ENCODE measurements at regions of chr9 and their contacts with region 1.

Region 1: GRCh38 chr9:117411548-117411947 is 3.3 kb downstream of the ASTN2 start:
- DNase-seq: peak; percentile 80
- ATAC-seq: peak; percentile 46
- H3K4me3 Mint-ChIP-seq: peak overlapping the region; percentile 53
- H3K27ac Mint-ChIP-seq: no peak overlapping the region
- H3K4me1 Mint-ChIP-seq: peaks cover 41% of the 10 kb centered on the region
- H3K27me3 Mint-ChIP-seq: peaks cover 28% of the 10 kb centered on the region
- CTCF ChIP-seq: peak; percentile 82

Region 2: GRCh38 chr9:117232281-117232680 is 179.3 kb before region 1 on chr9:
- CTCF ChIA-PET with region 1: interaction called, 12 read pairs
- POLR2A ChIA-PET with region 1: no interaction called
- DNase-seq: no peak
- ATAC-seq: no peak
- H3K4me3 Mint-ChIP-seq: no peak overlapping the region
- H3K27ac Mint-ChIP-seq: no peak overlapping the region
- H3K4me1 Mint-ChIP-seq: peaks cover 4% of the 10 kb centered on the region; the same call in 1 of the 2 replicates
- H3K27me3 Mint-ChIP-seq: no peaks in the 10 kb centered on the region
- CTCF ChIP-seq: no peak

Region 3: DNA sequence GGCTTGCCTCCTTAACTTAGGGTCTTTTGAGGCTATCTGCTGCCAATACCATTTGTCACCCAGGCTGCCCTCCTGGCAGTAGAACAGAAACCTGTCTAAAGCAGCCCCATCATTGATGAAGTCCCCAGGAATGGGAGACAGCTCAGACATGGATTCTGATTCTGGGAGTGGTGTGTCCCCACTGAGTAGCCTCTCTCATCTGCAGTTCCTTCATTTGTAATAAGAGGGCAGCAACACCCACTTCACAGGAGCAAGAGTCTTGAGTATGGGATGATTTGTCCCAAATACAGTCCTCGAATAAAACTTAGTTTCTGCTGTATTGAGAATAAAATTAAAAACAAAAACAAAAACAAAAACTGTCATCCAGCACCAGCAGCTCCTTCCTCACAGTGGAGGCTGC is 164.3 kb before region 1 on chr9:
- CTCF ChIA-PET with region 1: interaction called, 25 read pairs
- POLR2A ChIA-PET with region 1: no interaction called
- DNase-seq: no peak
- ATAC-seq: peak; percentile 95
- H3K4me3 Mint-ChIP-seq: no peak overlapping the region
- H3K27ac Mint-ChIP-seq: no peak overlapping the region
- H3K4me1 Mint-ChIP-seq: no peaks in the 10 kb centered on the region
- H3K27me3 Mint-ChIP-seq: no peaks in the 10 kb centered on the region
- CTCF ChIP-seq: 0 out of 2 replicates have a peak, but pooled peaks have one; percentile 16

Region 4: GRCh38 chr9:117354244-117354847 is 57.2 kb before region 1 on chr9:
- CTCF ChIA-PET with region 1: interaction called, 18 read pairs
- POLR2A ChIA-PET with region 1: no interaction called
- DNase-seq: no peak
- ATAC-seq: peak; percentile 90
- H3K4me3 Mint-ChIP-seq: no peak overlapping the region
- H3K27ac Mint-ChIP-seq: peak overlapping the region; percentile 12; the same call in 1 of the 2 replicates
- H3K4me1 Mint-ChIP-seq: peaks cover 26% of the 10 kb centered on the region
- H3K27me3 Mint-ChIP-seq: no peaks in the 10 kb centered on the region
- CTCF ChIP-seq: no peak

Region 5: GRCh38 chr9:117377046-117377634 is 34.4 kb before region 1 on chr9:
- CTCF ChIA-PET with region 1: interaction called, 17 read pairs
- POLR2A ChIA-PET with region 1: no interaction called
- DNase-seq: peak; percentile 38
- ATAC-seq: peak; percentile 95
- H3K4me3 Mint-ChIP-seq: peak overlapping the region; percentile 37; the same call in 1 of the 2 replicates
- H3K27ac Mint-ChIP-seq: peak overlapping the region; percentile 95
- H3K4me1 Mint-ChIP-seq: peaks cover 37% of the 10 kb centered on the region
- H3K27me3 Mint-ChIP-seq: no peaks in the 10 kb centered on the region; the same call in 1 of the 2 replicates
- CTCF ChIP-seq: no peak

Region 6: GRCh38 chr9:117448066-117448714 is 36.6 kb after region 1 on chr9:
- CTCF ChIA-PET with region 1: interaction called, 10 read pairs
- POLR2A ChIA-PET with region 1: no interaction called
- DNase-seq: no peak
- ATAC-seq: peak; percentile 75
- H3K4me3 Mint-ChIP-seq: no peak overlapping the region
- H3K27ac Mint-ChIP-seq: no peak overlapping the region
- H3K4me1 Mint-ChIP-seq: no peaks in the 10 kb centered on the region
- H3K27me3 Mint-ChIP-seq: no peaks in the 10 kb centered on the region
- CTCF ChIP-seq: no peak

Region 7: GRCh38 chr9:117459913-117460312 is 48.4 kb after region 1 on chr9:
- CTCF ChIA-PET with region 1: no interaction called
- POLR2A ChIA-PET with region 1: no interaction called
- DNase-seq: no peak
- ATAC-seq: no peak
- H3K4me3 Mint-ChIP-seq: no peak overlapping the region
- H3K27ac Mint-ChIP-seq: no peak overlapping the region
- H3K4me1 Mint-ChIP-seq: no peaks in the 10 kb centered on the region
- H3K27me3 Mint-ChIP-seq: no peaks in the 10 kb centered on the region
- CTCF ChIP-seq: no peak